H1 (cell line): ENCODE measurements at regions of chr17 and their contacts with region 1.

Region 1: DNA sequence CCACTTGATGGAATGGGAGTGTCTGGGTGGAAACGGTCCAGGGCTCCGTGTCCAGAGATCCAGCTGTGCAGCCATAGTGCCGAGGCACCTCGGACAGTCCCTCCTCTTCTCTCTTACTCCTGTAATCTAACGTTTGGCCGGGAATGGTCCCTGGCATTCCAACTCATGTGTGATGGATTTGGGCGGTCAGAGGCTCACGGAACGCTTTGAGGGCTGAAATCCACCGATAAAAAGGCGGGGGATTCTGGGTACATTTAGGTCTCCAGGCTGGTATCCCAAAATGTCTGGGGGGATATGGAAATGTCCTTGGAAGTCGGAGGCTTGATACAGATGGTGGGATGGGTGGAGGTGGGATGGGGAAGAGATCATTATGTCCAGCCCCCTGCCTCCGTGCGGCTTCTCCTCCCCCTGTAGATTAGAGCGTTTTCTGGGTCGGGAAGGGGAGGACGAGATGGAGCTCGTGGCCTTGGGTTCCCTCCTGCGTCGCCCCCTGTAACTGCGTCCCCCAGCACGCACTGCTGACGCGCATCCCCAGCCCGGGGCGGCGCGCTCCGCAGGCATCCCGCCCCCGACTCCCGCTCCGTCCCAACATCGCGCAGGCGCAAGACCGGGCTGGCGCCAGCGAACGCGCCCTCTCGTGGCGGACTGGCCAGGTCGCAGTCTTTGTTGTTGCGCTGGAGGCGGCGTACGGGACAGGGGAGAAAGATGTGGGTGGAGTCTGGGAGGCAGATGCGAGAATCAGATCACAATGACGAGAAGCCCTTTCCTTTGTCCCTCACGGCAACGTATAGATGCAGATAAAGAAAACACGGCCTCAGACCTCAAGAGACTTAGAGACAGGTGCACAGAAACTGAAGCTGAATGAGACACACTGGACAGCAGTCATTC is 4.5 kb upstream of the SGCA start:
- DNase-seq: peak in 1 of 2 experiments; percentile 99
- H3K4me3 ChIP-seq: peak overlapping the region; percentile 28 to 62 (median 40)
- H3K27ac ChIP-seq: no peak overlapping the region
- H3K4me1 ChIP-seq: peaks cover 0 to 7% (median 6%) of the 10 kb centered on the region in 4 experiments; a peak in 3 of 7 replicates
- H3K27me3 ChIP-seq: peaks cover 0 to 6% (median 0%) of the 10 kb centered on the region in 4 experiments; a peak in 2 of 7 replicates
- CTCF ChIP-seq: peak; percentile 89 to 99 (median 97)
- EP300 ChIP-seq: no peak
- POLR2A ChIP-seq: peak in 1 of 2 experiments; percentile 55; a peak in 1 of 3 replicates
- RAD21 ChIP-seq: peak; percentile 56 to 72

Region 2: DNA sequence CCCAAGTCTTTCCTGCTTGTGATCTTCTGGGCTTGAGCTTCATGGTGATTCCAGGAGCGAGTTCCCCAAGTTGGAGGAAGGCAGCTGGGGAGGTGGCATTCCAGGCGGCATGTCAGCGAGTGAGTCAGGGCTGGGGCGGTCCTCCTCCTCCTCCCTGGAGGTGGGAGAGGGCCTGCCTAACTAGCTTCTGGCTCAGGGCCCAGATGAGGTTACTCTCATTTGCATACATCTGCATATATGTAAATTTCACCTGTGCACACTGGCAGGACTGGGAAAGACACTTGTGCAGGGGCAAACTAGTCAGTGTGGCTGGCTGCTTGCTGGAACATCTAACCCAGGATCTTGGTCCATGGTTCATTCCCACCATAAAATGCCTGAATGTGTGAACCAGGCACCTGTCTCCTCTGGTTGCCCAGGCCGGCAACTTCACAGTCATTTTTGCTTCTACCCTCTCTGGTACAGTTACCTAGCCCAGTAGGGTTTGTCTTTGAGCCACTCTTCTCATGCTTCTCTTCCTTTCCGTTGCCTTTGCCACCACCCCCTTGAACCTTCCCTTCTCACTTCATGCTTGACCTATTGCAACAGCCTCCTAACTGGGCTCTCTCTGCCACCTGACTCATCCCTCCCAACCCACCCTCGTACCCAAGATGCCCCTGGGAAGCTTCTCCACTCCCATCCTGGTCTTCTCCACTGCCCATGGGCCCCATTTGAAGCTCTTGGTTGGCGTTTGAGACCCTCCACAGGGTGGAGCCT is 201.9 kb before region 1 on chr17:
- CTCF ChIA-PET with region 1: no interaction called
- POLR2A ChIA-PET with region 1: no interaction called
- DNase-seq: no peak
- H3K4me3 ChIP-seq: no peak overlapping the region
- H3K27ac ChIP-seq: no peak overlapping the region
- H3K4me1 ChIP-seq: peaks cover 0 to 20% (median 14%) of the 10 kb centered on the region in 4 experiments; a peak in 6 of 7 replicates
- H3K27me3 ChIP-seq: peaks cover 21 to 36% (median 31%) of the 10 kb centered on the region in 4 experiments
- CTCF ChIP-seq: no peak
- EP300 ChIP-seq: no peak
- POLR2A ChIP-seq: no peak
- RAD21 ChIP-seq: no peak

Region 3: GRCh38 chr17:50071692-50072486 is 89.4 kb before region 1 on chr17:
- CTCF ChIA-PET with region 1: no interaction called
- POLR2A ChIA-PET with region 1: no interaction called
- DNase-seq: no peak
- H3K4me3 ChIP-seq: no peak overlapping the region
- H3K27ac ChIP-seq: no peak overlapping the region
- H3K4me1 ChIP-seq: peaks cover 0 to 1% (median 0%) of the 10 kb centered on the region in 4 experiments; a peak in 1 of 7 replicates
- H3K27me3 ChIP-seq: no peaks in the 10 kb centered on the region; a peak in 2 of 7 replicates
- CTCF ChIP-seq: no peak
- EP300 ChIP-seq: no peak
- POLR2A ChIP-seq: no peak
- RAD21 ChIP-seq: no peak

Region 4: DNA sequence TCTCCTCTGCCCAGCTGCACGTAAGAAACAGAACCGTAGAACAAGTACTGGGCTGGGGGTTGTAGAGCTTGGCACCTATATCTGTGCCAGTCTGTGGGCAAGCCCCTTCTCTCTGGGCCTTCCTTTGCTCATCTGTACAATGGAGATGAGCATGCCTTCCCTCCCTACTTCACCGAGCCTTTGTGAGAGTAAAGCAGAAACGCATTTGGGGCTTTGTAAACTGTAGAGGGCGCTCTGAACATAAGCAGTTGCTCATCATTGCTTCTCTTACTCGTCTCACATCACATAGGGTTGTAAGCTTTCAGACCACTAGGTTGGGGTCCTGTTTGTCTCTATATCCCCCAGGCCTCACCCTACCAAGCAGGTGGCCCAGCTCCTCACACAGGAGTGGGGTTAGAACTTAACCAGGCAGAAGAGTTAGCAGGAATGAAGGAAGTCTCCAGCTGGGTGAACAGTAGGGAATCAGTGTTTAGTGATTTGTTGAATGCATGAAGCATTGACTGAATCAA is 46.4 kb before region 1 on chr17:
- CTCF ChIA-PET with region 1: interaction called, 123 read pairs
- POLR2A ChIA-PET with region 1: no interaction called
- DNase-seq: peak in 1 of 2 experiments; percentile 66
- H3K4me3 ChIP-seq: no peak overlapping the region
- H3K27ac ChIP-seq: no peak overlapping the region
- H3K4me1 ChIP-seq: peaks cover 6 to 14% (median 11%) of the 10 kb centered on the region in 4 experiments
- H3K27me3 ChIP-seq: peaks cover 0 to 18% (median 12%) of the 10 kb centered on the region in 4 experiments; a peak in 5 of 7 replicates
- CTCF ChIP-seq: peak in 2 of 3 experiments; percentile 89 to 93; a peak in 3 of 4 replicates
- EP300 ChIP-seq: no peak
- POLR2A ChIP-seq: no peak
- RAD21 ChIP-seq: peak; percentile 68 to 73

Region 5: DNA sequence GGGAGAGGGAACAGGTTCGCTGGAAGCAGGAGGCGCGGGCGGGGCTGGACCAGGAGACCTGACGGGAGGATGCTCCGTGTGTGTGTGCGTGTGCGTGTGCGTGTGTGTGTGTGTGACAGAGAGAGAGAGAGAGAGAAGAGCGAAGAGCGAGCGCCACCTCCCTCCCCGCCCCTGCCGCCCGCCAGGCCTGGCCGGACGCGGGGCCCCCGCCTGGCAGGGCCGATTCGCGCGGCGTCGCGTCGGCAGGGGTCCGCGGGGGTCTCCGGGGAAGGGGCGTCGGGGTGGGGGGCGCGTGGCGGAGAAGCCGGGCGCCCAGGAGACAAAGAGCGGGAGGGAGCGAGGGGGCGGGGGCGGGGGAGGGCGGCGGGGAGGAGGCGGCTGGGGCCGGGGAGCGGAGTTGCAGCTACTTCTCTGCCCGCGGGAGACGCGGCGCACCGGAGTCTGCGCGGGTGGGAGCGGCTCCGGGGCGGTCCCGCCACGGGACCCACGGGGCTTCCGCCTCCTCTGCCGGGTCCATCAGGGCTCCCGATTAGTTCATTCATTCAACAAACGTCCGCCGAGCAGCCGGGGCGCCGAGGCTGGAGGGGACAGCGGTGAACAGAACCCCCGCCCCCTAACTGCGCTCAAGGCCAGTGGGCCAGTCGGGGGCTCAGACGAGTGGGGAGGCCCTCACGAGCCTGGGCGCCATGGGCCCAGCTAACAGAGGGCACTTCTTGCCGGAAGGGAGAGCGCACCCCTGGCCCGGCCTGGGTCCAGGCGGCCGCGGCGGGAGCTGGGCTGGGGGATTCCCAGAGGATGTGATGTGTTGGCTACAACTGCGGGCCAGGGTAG is 31.3 kb before region 1 on chr17 and contains the start of gene SAMD14:
- CTCF ChIA-PET with region 1: interaction called, 299 read pairs
- POLR2A ChIA-PET with region 1: interaction called, 3 read pairs
- DNase-seq: no peak
- H3K4me3 ChIP-seq: peak within 1 kb of the TSS; percentile 37 to 97 (median 74)
- H3K27ac ChIP-seq: no peak within 1 kb of the TSS
- H3K4me1 ChIP-seq: peaks cover 8 to 34% (median 30%) of the 10 kb centered on the region in 4 experiments
- H3K27me3 ChIP-seq: peaks cover 0 to 11% (median 2%) of the 10 kb centered on the region in 4 experiments; a peak in 4 of 7 replicates
- CTCF ChIP-seq: no peak
- EP300 ChIP-seq: no peak
- POLR2A ChIP-seq: no peak
- RAD21 ChIP-seq: no peak
- total RNA-seq, gene SAMD14: 5.8 and 5.9 TPM in 2 replicates

Region 6: GRCh38 chr17:50177983-50178834 is 16.9 kb after region 1 on chr17:
- CTCF ChIA-PET with region 1: interaction called, 22 read pairs
- POLR2A ChIA-PET with region 1: interaction called, 4 read pairs
- DNase-seq: peak; percentile 39 to 80
- H3K4me3 ChIP-seq: peak overlapping the region in 3 of 4 experiments; percentile 17 to 42 (median 24); a peak in 3 of 8 replicates
- H3K27ac ChIP-seq: no peak overlapping the region
- H3K4me1 ChIP-seq: peaks cover 4 to 22% (median 15%) of the 10 kb centered on the region in 4 experiments
- H3K27me3 ChIP-seq: no peaks in the 10 kb centered on the region
- CTCF ChIP-seq: peak; percentile 50 to 60 (median 57)
- EP300 ChIP-seq: no peak
- POLR2A ChIP-seq: peak in 1 of 2 experiments; percentile 45; a peak in 1 of 3 replicates
- RAD21 ChIP-seq: peak in 1 of 2 experiments; percentile 24; a peak in 1 of 4 replicates

Region 7: GRCh38 chr17:50225693-50226240 is 64.5 kb after region 1 on chr17:
- CTCF ChIA-PET with region 1: no interaction called
- POLR2A ChIA-PET with region 1: no interaction called
- DNase-seq: no peak
- H3K4me3 ChIP-seq: no peak overlapping the region
- H3K27ac ChIP-seq: no peak overlapping the region
- H3K4me1 ChIP-seq: peaks cover 0 to under 1% (median 0%) of the 10 kb centered on the region in 4 experiments; a peak in 1 of 7 replicates
- H3K27me3 ChIP-seq: no peaks in the 10 kb centered on the region; a peak in 1 of 7 replicates
- CTCF ChIP-seq: no peak
- EP300 ChIP-seq: no peak
- POLR2A ChIP-seq: no peak
- RAD21 ChIP-seq: no peak

Region 8: DNA sequence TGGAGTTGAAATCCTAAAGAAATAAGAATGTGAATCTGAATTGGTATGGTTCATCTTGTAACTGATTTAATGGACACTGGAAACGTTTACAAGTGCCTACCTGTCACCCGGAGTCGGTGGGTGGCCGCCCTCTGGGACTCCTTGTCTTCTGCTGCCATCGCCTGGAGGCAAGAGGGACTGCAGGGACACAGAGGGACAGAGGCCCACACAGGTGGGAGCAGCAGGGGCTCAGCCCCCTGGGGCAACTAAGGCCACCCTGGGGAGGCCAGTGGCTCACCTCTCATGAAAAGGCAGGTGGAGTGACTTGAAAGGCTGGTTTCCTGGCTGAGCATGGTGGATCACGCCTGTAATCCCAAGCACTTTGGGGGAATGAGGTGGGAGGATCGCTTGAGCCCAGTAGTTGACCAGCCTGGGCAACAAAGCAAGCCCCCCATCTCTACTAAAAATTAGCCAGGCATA is 136.2 kb after region 1 on chr17:
- CTCF ChIA-PET with region 1: interaction called, 299 read pairs
- POLR2A ChIA-PET with region 1: no interaction called
- DNase-seq: peak; percentile 50 to 93
- H3K4me3 ChIP-seq: no peak overlapping the region
- H3K27ac ChIP-seq: no peak overlapping the region
- H3K4me1 ChIP-seq: peaks cover 0 to 4% (median under 1%) of the 10 kb centered on the region in 4 experiments; a peak in 2 of 7 replicates
- H3K27me3 ChIP-seq: no peaks in the 10 kb centered on the region
- CTCF ChIP-seq: peak; percentile 93 to 96 (median 94)
- EP300 ChIP-seq: no peak
- POLR2A ChIP-seq: no peak
- RAD21 ChIP-seq: peak; percentile 99 to 100

Region 9: DNA sequence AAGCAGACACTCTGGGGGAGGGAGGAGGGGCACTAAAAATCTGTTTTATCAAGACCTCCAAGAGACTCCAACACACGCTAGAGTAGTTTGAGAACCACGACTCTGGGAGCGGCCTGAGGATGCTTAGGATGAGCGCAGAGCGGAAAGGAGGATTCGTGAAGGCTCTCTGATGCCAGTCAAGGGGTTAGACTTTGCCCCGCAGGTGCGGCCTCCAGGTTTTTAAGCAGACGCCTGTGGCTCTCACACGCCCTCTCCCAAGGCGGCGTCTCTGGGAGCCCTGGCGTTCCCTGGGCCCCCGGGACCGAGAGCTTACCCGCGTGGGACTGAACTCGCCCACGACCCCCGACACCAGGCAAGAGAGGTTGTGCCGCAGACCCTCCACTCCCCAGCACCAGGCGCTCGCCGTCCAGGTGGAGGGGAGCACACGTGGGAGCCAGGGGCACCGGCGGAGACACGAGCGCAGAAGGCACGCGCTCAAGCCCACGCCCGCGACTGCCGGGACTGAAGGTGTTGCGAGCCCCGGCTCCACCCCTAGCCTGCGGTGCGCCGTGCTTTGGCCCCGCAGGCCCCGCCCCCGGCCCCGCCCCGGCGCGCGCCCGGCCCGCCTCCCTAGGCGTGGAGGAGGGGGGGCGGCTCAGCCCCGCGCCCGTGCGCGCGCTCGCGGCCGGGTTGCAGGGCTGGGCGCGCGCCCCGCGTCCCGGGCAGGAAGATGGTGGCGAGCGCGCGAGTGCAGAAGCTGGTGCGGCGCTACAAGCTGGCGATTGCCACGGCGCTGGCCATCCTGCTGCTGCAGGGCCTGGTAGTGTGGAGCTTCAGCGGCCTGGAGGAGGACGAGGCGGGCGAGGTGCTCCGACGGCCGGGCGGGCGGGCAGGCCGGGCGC is 184.4 kb after region 1 on chr17 and contains the start of gene XYLT2:
- CTCF ChIA-PET with region 1: no interaction called
- POLR2A ChIA-PET with region 1: no interaction called
- DNase-seq: peak in 1 of 2 experiments; percentile 89
- H3K4me3 ChIP-seq: peak within 1 kb of the TSS; percentile 81 to 93 (median 88)
- H3K27ac ChIP-seq: peak within 1 kb of the TSS; percentile 80; the same call in 1 of the 2 replicates
- H3K4me1 ChIP-seq: peaks cover 4 to 17% (median 11%) of the 10 kb centered on the region in 4 experiments
- H3K27me3 ChIP-seq: peaks cover 0 to 9% (median 5%) of the 10 kb centered on the region in 4 experiments; a peak in 4 of 7 replicates
- CTCF ChIP-seq: no peak
- EP300 ChIP-seq: no peak
- POLR2A ChIP-seq: peak; percentile 51 to 60
- RAD21 ChIP-seq: no peak
- total RNA-seq, gene XYLT2: 28.0 and 28.9 TPM in 2 replicates